Activated CD8-positive, alpha-beta T cell treated with anti-CD3 and anti-CD28 coated beads, Interleukin-2, amount 10 ng/mL, durations not matched to agents 7 days and 5 days (primary cell): ENCODE measurements at regions of chr11 and their contacts with region 1.

Region 1: DNA sequence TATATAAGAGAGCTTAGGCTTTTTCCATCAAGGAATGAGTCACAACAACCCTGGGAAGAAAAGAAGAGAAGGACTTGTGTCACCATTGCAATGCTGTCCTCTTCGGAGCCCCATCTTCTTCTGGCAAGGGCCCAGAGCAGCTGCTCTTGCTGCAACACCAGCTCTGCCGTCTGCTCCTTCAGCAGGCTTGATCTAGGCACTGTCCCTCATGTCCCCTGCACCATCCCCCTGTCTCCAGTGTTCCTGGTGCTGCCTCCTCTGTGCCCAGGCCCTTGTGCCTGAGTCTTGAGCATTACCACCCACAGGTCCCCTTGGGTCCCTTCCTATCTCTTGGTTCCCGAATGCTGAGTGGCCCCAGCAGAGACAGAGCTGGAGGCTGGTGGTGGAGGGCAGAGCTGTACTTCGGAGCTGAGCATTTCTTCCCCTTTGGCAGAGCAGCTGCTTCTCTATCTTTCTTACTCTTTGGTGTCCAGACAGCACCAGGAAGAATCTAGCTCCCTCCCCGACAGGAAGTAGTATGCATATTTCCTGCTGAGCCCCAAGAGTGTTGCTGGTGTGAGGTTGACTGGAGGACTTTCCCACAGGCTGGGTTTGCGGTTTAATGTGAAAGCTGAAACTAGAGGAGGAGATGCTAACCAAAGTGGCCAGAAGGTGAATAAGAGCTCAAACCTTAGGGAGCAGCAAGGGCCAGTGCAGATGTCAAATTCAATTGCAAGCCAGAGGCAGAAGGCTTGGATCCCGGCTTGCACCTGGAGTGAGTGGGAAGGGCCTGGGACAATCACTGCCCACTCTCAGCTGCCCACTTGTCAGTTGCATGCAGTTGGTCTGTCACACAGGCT is 27.8 kb downstream of the WEE1 start:
- DNase-seq: peak; percentile 89
- ATAC-seq: peak; percentile 92
- H3K4me3 Mint-ChIP-seq: peak overlapping the region; percentile 72
- H3K27ac Mint-ChIP-seq: peak overlapping the region; percentile 71
- H3K4me1 Mint-ChIP-seq: peaks cover 31% of the 10 kb centered on the region
- H3K27me3 Mint-ChIP-seq: peaks cover 11% of the 10 kb centered on the region

Region 2: DNA sequence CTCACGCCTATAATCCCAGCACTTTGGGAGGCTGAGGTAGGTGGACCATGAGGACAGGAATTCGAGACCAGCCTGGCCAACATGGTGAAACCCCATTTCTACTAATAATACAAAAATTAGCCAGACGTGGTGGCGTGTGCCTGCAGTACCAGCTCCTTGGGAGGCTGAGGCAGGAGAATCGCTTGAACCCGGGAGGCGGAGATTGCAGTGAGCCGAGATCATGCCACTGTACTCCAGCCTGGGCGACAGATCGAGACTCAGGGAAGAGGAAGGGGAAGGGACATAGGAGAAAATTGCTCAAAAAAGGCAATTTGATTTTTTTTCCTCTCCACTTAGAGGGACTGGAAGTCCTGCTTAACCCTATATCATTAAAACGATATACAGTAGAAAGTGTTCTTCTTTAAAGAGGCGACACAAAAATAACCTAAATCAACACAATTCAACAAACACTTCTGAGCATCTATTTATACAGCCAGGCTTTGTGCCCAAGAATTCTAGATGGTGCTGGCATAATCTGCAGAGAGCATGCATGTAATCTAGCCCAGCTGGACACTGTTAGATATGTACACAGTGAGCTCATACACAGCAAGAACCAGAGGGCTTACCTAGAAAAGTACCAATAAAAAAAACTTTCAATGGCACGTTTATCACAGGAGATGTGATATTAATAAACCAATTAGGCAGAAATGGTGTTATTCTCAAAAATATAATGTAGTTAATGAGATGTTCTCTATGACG is 315.2 kb before region 1 on chr11:
- CTCF ChIA-PET with region 1: no interaction called
- POLR2A ChIA-PET with region 1: no interaction called
- DNase-seq: no peak
- ATAC-seq: no peak
- H3K4me3 Mint-ChIP-seq: no peak overlapping the region
- H3K27ac Mint-ChIP-seq: no peak overlapping the region
- H3K4me1 Mint-ChIP-seq: peaks cover 6% of the 10 kb centered on the region
- H3K27me3 Mint-ChIP-seq: no peaks in the 10 kb centered on the region

Region 3: DNA sequence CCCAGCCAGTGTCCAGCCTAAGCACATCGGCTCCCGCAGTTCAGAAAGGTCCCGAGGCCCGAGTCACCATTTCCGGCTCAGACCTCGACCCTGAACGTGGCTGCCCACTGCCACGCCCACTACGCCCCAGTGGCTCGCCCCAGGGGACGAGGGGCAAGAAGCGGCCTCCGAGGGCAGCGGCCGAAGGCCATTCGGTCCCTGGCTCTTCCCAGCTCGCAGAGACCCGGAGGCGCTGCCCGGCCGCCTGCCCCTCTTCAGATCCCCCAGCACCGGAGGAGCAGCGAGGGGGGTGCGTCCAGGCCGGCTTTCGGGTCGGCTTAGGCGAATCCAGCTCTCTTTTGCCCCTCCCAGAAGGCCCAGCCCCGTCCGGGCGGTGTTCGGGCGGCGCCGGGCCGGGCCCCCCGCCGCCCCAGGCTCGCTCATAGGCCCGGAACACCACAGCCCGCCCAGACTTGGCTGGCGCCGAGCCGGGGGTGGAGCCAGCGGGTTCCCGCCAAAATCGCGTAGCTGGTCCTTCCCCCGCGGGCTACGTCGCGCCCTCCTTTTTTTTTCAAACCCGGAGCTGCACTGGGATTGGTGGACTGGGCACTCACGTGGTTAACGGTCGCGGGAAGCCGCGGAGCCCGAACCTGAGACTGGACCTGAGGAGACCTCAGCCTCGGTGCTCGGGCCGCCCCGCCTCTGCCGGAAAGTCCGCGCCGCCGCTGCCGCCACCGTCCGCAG is 28.0 kb before region 1 on chr11 and contains the start of gene WEE1:
- CTCF ChIA-PET with region 1: interaction called, 7 read pairs
- POLR2A ChIA-PET with region 1: interaction called, 15 read pairs
- DNase-seq: peak; percentile 98
- ATAC-seq: peak; percentile 96
- H3K4me3 Mint-ChIP-seq: peak within 1 kb of the TSS; percentile 98
- H3K27ac Mint-ChIP-seq: peak within 1 kb of the TSS; percentile 87
- H3K4me1 Mint-ChIP-seq: peaks cover 46% of the 10 kb centered on the region
- H3K27me3 Mint-ChIP-seq: peaks cover 14% of the 10 kb centered on the region
- total RNA-seq, gene WEE1: 73.3 to 75.1 TPM